ENCODE measurements at regions of chr7 and their contacts with region 1.

Region 1: GRCh38 chr7:102433219-102434038 is at the start of gene ORAI2:
- DNase-seq: peak; percentile 90
- CTCF ChIP-seq: no peak

Region 2: GRCh38 chr7:101402088-101402779 is 1031.2 kb before region 1 on chr7:
- CTCF ChIA-PET with region 1: no interaction called
- POLR2A ChIA-PET with region 1: no interaction called
- DNase-seq: no peak
- CTCF ChIP-seq: no peak

Region 3: DNA sequence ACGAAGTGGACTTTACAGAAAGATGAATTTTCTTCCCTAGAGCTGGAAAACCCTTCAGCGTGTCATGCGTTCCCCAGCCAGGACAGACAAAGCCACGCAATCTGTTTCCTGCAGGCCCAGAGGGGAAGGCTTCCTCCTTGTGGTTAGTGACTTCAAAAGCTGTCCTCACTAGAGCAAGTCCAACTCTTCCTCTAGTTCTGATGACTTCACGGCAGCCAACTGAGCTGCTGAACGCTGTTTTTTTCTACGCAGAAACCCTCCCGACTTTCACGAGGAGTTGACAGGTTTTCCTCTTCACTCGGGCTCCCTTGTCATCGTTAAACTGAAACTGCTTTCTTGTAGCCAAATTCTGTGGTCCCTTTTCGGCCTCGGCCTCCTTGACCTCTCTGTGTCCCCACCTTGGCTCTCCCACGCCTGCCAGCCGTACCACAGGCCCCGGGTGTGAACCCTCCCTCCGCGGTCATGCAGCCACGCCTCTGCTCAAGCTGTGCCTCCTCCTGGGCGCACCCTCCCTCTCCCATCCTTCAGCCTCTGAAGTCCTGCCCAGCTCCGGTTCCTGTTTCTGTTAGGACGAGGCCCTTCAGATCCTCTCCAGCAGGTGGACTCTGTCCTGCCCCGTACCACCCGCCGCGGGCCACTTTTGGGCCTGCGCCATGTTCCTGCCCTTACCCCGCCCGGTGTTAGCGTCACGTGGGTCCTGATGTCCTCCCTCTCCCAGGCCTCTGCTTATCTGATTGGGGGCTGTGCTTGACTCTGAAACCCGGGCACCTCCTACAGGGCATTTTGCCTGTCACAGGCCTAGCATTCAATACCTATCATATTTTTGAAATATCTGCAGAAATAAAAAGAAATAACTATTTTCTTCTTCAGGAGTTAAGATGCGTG is 576.7 kb before region 1 on chr7:
- CTCF ChIA-PET with region 1: no interaction called
- POLR2A ChIA-PET with region 1: no interaction called
- DNase-seq: peak; percentile 90
- CTCF ChIP-seq: peak; percentile 14

Region 4: DNA sequence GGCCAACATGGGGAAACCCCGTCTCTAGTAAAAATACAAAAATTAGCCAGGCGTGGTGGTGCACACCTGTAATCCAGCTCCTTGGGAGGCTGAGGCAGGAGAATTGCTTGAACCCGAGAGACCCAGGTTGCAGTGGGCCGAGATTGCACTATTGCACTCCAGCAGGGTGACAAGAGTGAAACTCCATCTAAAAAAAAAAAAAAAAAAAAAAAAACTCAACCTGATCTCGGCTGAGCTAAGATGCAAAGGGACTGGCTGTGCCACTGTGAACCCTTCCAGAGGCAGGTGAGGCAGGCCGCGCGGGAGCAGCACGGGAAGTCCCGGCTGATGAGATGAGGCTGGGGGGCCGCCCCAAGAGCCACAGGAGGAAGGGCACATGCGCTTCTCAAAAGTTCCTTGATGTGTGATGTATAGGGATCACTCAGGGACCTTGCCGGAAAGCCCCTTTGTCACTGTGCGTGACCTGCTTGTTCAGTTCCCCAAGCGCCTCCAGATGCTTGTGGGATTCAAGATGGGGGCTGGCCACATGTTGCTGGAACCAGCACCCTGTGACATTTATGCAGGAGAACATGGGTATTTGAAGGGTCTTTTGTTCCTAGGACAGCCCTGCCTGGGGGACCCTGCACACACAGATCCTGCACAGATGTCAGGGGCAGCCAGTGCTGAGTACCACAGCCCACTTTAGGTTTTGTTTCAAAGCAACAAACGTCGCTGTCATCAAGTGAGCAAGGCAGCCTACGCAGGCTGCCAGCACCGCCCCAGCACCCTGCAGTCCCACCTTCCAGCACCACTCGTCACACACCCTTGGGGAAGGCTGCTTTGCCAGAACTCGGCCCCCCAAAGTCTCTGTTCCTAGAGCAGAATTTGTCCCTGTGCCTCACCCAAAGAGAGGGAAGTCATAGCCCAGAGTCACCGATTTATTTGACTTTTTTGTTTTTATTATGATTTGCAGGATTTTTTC is 221.6 kb before region 1 on chr7:
- CTCF ChIA-PET with region 1: no interaction called
- POLR2A ChIA-PET with region 1: no interaction called
- DNase-seq: peak; percentile 81
- CTCF ChIP-seq: no peak

Region 5: DNA sequence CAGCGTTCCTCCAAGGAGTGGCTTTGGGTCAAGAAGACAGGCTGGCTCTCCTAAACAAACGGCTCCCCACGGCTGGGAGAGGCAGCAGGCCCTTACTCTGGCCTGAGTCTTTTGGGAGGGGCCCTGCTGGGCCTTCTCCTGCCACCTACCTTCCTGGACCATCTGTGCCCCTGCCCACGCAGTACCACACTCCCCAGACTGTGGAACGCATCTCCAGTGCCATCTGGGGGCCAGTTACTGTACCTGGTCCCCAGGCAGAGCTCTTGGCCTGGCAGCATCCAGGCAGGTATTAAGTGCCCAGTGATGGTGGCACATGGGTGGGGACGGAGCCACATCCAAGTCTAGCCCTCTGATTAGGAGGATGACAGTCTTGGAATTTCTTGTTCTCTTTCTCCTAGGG is 16.8 kb after region 1 on chr7:
- CTCF ChIA-PET with region 1: interaction called, 11 read pairs
- POLR2A ChIA-PET with region 1: interaction called, 4 read pairs
- DNase-seq: no peak
- CTCF ChIP-seq: peak; percentile 63

Measured in GM10248 (cell line).